ENCODE measurements at regions of chr10 and their contacts with region 1.

Region 1: DNA sequence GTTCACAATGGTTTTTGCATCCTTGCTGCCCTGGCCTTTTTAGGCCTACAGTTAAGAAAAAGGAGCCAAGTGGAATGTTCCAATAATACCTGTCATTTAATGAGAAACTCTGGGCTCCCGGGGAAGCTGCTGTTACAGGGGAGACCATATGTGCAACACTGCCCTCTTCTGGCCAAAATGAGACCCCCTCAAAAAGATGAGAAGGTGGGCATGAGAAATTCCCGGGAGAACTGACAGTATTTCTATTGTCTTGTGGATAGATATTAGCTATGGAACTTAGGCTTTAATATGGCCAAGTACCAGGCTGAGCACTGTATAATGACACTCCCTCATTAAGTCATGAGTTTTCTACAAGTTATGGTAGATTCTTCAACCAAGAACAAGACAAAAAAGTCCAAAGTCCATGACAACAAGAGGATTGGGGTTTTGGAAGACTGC is 99.4 kb downstream of the CCDC3 start:
- DNase-seq: peak; percentile 83
- H3K4me3 ChIP-seq: no peak overlapping the region; a peak in 1 of 4 replicates
- H3K27ac ChIP-seq: no peak overlapping the region
- H3K4me1 ChIP-seq: no peaks in the 10 kb centered on the region
- H3K27me3 ChIP-seq: no peaks in the 10 kb centered on the region; the same call in 1 of the 2 replicates
- CTCF ChIP-seq: peak; percentile 86
- EP300 ChIP-seq: no peak
- RAD21 ChIP-seq: peak; percentile 89

Region 2: DNA sequence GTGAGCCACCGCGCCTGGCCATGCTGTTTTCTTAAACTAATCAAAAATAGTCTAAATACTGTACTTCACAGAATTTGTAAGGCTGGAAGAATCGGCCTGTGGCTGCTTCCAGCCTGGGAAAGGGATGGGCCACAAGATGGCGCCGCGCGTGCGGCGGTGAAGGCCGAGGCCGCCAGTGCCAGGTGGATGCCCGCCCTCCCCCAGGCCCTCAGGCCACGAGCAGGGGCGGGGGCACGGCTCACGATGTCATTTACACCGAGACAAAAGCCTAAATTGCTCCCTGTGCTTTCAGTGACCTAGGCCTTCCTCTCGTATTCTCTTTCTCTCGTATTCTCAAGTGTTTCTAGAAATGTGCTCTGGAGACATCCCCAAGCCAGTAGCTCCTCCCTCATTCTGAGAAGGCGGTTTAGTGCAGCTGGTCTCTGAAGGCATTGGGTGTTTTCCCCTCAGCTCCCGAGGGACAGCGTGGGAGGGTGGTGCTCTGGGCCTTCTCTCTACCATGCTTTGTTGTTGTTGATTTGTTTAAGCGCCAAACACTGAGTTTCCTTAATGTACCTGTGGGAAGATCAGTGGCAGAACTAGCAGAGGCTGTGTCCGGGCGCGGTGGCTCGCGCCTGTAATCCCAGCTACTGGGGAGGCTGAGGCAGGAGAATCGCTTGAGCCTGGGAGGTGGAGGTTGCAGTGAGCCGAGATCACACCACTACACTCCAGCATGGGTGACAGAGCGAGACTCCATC is 637.8 kb before region 1 on chr10:
- CTCF ChIA-PET with region 1: interaction called, 12 read pairs
- POLR2A ChIA-PET with region 1: interaction called, 3 read pairs
- DNase-seq: peak; percentile 88
- H3K4me3 ChIP-seq: peak overlapping the region; percentile 45 to 60
- H3K27ac ChIP-seq: peak overlapping the region in 1 of 2 experiments; percentile 45; a peak in 1 of 4 replicates
- H3K4me1 ChIP-seq: no peaks in the 10 kb centered on the region; a peak in 1 of 4 replicates
- H3K27me3 ChIP-seq: no peaks in the 10 kb centered on the region
- CTCF ChIP-seq: peak; percentile 90
- EP300 ChIP-seq: no peak; a peak in 1 of 4 replicates
- RAD21 ChIP-seq: peak; percentile 94

Region 3: DNA sequence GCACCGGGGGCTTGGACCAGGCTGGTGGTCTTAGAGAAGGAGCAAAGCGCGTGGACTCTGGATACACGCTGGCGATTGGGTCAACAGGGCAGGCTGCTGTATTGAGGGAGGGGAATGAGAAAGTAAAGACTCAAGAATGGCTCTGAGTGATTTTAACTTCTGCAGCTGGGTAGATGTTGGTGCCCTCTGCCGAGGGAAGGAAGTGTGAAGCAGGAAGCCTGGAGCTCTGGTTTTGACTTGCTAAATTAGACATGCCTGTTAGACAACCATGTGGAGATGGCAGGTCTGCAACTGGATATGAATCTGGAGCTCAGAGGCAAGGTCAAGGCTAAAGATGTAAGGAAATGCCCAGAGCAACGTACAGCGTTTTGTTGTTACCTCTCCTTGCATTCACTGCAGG is 17.8 kb before region 1 on chr10:
- CTCF ChIA-PET with region 1: interaction called, 12 read pairs
- POLR2A ChIA-PET with region 1: no interaction called
- DNase-seq: no peak
- H3K4me3 ChIP-seq: no peak overlapping the region
- H3K27ac ChIP-seq: no peak overlapping the region
- H3K4me1 ChIP-seq: no peaks in the 10 kb centered on the region; a peak in 1 of 4 replicates
- H3K27me3 ChIP-seq: no peaks in the 10 kb centered on the region
- CTCF ChIP-seq: no peak
- EP300 ChIP-seq: no peak
- RAD21 ChIP-seq: no peak

Region 4: GRCh38 chr10:13056456-13057077 is 154.4 kb after region 1 on chr10:
- CTCF ChIA-PET with region 1: interaction called, 13 read pairs
- POLR2A ChIA-PET with region 1: interaction called, 4 read pairs
- DNase-seq: peak; percentile 64
- H3K4me3 ChIP-seq: no peak overlapping the region
- H3K27ac ChIP-seq: no peak overlapping the region
- H3K4me1 ChIP-seq: no peaks in the 10 kb centered on the region; a peak in 1 of 4 replicates
- H3K27me3 ChIP-seq: no peaks in the 10 kb centered on the region
- CTCF ChIP-seq: peak; percentile 42
- EP300 ChIP-seq: no peak
- RAD21 ChIP-seq: peak; percentile 70

Region 5: DNA sequence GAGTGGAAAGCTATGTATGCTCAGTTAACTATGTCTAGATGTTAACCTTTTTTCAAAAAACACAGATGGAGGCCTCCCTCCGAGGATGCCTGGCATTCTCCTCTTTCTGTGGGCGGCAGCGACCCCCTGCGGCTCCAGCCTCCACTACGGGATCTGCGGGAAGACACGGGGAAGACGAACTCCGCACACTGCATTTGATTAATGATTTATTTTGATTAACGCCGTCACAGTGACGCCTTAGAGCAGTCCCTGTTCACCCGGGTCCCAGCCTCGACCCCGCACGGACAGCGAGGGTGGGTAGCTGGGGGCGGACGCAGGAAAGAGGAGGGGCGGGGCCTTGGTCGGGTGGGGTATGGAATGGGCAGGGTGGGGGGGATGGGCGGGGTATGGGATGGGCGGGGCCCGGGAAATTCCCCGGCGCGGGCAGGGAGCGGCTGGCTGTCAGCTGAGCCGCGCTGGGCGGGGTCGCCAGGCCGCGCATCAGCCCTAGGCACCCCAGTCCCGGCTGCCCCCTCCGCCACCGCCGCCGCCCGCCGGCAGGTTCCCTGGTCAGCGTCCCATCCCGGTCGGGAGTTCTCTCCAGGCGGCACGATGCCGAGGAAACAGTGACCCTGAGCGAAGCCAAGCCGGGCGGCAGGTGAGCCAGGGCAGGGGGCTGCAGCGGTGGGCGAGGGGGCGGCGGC is 197.7 kb after region 1 on chr10 and contains the start of gene OPTN:
- CTCF ChIA-PET with region 1: interaction called, 10 read pairs
- POLR2A ChIA-PET with region 1: no interaction called
- DNase-seq: peak; percentile 96
- H3K4me3 ChIP-seq: peak within 1 kb of the TSS; percentile 64 to 80
- H3K27ac ChIP-seq: peak within 1 kb of the TSS; percentile 80 to 93
- H3K4me1 ChIP-seq: peaks cover 3 to 8% of the 10 kb centered on the region in 2 experiments; a peak in 1 of 4 replicates
- H3K27me3 ChIP-seq: no peaks in the 10 kb centered on the region
- CTCF ChIP-seq: peak; percentile 91
- EP300 ChIP-seq: no peak
- RAD21 ChIP-seq: peak; percentile 66
- polyA plus RNA-seq, gene OPTN: 21.6 and 22.4 TPM in 2 replicates

Region 6: DNA sequence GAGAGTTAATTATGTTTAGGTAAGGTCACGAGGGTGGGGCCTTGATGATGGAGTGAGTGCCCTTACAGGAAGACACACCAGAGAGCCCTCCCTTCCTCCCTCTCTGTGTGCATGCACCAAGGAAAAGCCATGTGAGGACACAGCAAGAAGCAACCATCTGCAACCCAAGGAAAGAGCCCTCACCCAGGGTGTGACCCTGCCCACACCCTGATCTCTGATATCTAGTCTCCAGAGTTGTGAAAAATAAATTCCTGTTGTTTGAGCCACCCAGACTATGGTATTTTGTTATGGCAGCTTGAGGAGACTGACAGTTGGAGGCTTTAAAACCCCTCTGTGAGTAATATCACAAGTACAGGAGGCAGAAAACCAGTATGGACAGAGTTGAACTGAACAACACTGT is 244.2 kb after region 1 on chr10:
- CTCF ChIA-PET with region 1: no interaction called
- POLR2A ChIA-PET with region 1: no interaction called
- DNase-seq: no peak
- H3K4me3 ChIP-seq: no peak overlapping the region; a peak in 1 of 4 replicates
- H3K27ac ChIP-seq: no peak overlapping the region
- H3K4me1 ChIP-seq: no peaks in the 10 kb centered on the region
- H3K27me3 ChIP-seq: no peaks in the 10 kb centered on the region
- CTCF ChIP-seq: no peak
- EP300 ChIP-seq: no peak
- RAD21 ChIP-seq: no peak

Measured in SK-N-SH (cell line).